Sigmoid colon (tissue), 7 donors: ENCODE measurements at regions of chr7 and their contacts with region 1.

Region 1: GRCh38 chr7:25851332-25852210 is 300.4 kb upstream of the NFE2L3 start:
- DNase-seq: peak; percentile 94
- H3K4me3 ChIP-seq: peak overlapping the region in 2 of 4 donors; percentile 32 to 36
- H3K27ac ChIP-seq: peak overlapping the region; percentile 79 to 95 (median 83)
- H3K4me1 ChIP-seq: peaks cover 0 to 86% (median 77%) of the 10 kb centered on the region in 4 donors
- H3K27me3 ChIP-seq: peaks cover 0 to 47% (median 6%) of the 10 kb centered on the region in 3 donors
- CTCF ChIP-seq: peak; percentile 81 to 94 (median 93)
- EP300 ChIP-seq: no peak
- POLR2A ChIP-seq: no peak

Region 2: GRCh38 chr7:25125137-25125946 is 726.2 kb before region 1 on chr7 and contains the start of gene CYCS:
- intact Hi-C with region 1: loop called (anchors 10 kb)
- DNase-seq: peak; percentile 100
- H3K4me3 ChIP-seq: peak within 1 kb of the TSS; percentile 75 to 98 (median 91)
- H3K27ac ChIP-seq: peak within 1 kb of the TSS; percentile 93 to 99 (median 98)
- H3K4me1 ChIP-seq: peaks cover 0 to 21% (median 15%) of the 10 kb centered on the region in 4 donors
- H3K27me3 ChIP-seq: no peaks in the 10 kb centered on the region
- CTCF ChIP-seq: no peak
- EP300 ChIP-seq: peak in 2 of 4 donors; percentile 81 to 99
- POLR2A ChIP-seq: peak; percentile 96 to 98
- total RNA-seq, gene CYCS: 33.2 to 69.2 (median 48.7) TPM

Region 3: DNA sequence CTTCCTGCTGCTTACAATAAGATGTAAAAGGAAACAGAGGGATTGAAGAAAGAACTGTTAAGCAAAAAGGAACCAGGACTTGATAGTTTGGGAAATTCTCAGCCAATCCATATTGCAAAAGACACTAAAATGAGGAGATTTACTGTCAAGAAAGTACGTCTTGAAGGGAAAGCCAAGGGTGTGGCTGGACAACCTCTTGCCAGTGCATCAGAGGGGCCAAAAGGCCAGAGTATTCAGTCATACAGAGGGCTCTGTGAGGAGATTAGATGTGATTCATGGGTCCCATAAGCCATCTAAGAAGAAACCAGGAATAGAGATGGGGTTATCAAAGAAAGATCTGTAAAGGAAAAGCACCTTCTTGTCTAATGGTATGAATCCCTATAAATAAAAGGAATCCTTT is 597.9 kb before region 1 on chr7:
- intact Hi-C with region 1: no loop called
- DNase-seq: no peak
- H3K4me3 ChIP-seq: no peak overlapping the region
- H3K27ac ChIP-seq: no peak overlapping the region
- H3K4me1 ChIP-seq: no peaks in the 10 kb centered on the region
- H3K27me3 ChIP-seq: no peaks in the 10 kb centered on the region
- CTCF ChIP-seq: no peak
- EP300 ChIP-seq: no peak
- POLR2A ChIP-seq: no peak

Region 4: DNA sequence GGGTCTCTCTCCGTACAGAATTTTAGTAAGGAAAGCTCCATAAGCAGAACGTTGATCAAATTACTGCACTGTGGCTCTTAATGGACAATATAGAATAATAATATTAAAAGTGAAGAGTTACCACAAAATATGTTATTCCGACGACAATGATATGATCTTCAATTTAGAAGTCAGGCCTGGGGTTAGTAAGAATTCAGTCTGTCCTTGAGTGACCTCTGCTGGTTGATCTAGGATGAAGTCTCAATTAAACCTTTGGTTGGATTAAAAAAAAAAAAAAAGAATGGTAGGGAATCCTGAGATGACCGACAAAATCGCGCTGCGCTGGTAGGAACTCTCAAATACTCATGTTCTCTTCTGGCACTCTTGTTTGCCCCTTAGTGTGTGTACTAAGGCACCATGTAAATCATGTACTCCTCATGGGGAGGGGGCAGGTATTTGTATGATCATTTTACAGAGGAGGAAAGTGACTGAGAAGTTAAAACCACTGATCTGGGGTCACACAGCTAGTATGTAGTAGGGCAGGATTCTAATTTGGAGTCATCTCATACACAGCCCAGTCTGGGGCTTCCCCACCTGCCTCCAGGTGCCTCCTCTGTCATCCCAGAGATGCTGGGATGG is 462.0 kb before region 1 on chr7:
- intact Hi-C with region 1: loop called (anchors 1 kb)
- DNase-seq: no peak
- H3K4me3 ChIP-seq: no peak overlapping the region
- H3K27ac ChIP-seq: no peak overlapping the region
- H3K4me1 ChIP-seq: peaks cover 0 to 53% (median 48%) of the 10 kb centered on the region in 4 donors
- H3K27me3 ChIP-seq: no peaks in the 10 kb centered on the region
- CTCF ChIP-seq: peak; percentile 33 to 65 (median 50)
- EP300 ChIP-seq: no peak
- POLR2A ChIP-seq: no peak

Region 5: GRCh38 chr7:25565949-25566348 is 285.6 kb before region 1 on chr7:
- intact Hi-C with region 1: loop called (anchors 2 kb)
- DNase-seq: peak; percentile 81
- H3K4me3 ChIP-seq: no peak overlapping the region
- H3K27ac ChIP-seq: peak overlapping the region in 2 of 4 donors; percentile 70 to 76
- H3K4me1 ChIP-seq: peaks cover 0 to 48% (median 40%) of the 10 kb centered on the region in 4 donors
- H3K27me3 ChIP-seq: no peaks in the 10 kb centered on the region
- CTCF ChIP-seq: peak; percentile 99 to 100 (median 100)
- EP300 ChIP-seq: no peak
- POLR2A ChIP-seq: no peak

Region 6: DNA sequence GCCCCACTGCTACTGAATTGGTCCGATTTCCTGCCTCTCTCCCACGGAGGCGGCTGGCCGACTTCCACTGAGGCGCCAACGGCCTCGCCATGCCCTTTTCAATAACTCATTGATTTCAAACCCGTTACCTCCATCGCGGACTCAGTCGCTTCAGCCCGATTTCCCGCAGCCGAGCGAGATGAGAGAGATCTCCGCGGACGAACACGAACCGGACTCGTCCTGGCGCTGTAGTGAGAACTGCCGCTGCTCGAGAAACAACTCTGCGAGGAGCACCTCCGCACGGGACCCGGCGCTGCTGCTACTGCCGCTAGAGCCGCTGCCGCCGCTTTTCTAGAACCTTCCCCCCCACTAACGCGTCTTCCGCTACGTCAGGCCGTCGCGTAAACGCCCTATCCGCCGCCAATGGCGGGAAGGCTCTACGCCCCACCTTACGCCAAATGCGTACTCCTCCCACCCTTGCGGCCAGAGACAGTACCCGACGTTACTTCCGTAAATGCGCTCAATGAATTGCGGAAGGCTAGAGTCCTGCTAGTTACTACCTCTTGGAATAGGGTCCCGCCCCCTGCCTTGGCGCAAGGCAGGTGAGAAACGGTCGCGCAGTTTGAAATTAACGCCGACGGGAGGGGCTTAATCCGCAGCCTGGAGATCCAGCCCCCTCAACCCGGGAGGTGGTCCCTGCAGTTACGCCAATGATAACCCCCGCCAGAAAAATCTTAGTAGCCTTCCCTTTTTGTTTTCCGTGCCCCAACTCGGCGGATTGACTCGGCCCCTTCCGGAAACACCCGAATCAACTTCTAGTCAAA is 349.1 kb after region 1 on chr7 and contains the start of gene HNRNPA2B1:
- intact Hi-C with region 1: loop called (anchors 5 kb)
- DNase-seq: peak; percentile 99
- H3K4me3 ChIP-seq: peak within 1 kb of the TSS; percentile 83 to 98 (median 94)
- H3K27ac ChIP-seq: peak within 1 kb of the TSS; percentile 97 to 99 (median 98)
- H3K4me1 ChIP-seq: peaks cover 0 to 55% (median 49%) of the 10 kb centered on the region in 4 donors
- H3K27me3 ChIP-seq: no peaks in the 10 kb centered on the region
- CTCF ChIP-seq: peak in 2 of 4 experiments; percentile 4 to 16
- EP300 ChIP-seq: no peak
- POLR2A ChIP-seq: peak; percentile 100
- total RNA-seq, gene HNRNPA2B1: 141 to 208 (median 181) TPM

Region 7: GRCh38 chr7:27150568-27151340 is 1299.2 kb after region 1 on chr7:
- intact Hi-C with region 1: loop called (anchors 5 kb)
- DNase-seq: peak; percentile 93
- H3K4me3 ChIP-seq: peak overlapping the region; percentile 64 to 73 (median 68)
- H3K27ac ChIP-seq: peak overlapping the region in 3 of 4 donors; percentile 91 to 96 (median 95)
- H3K4me1 ChIP-seq: peaks cover 0 to 76% (median 58%) of the 10 kb centered on the region in 4 donors
- H3K27me3 ChIP-seq: no peaks in the 10 kb centered on the region
- CTCF ChIP-seq: peak; percentile 82 to 90 (median 88)
- EP300 ChIP-seq: peak in 1 of 4 donors; percentile 61
- POLR2A ChIP-seq: peak; percentile 90 to 93